ENCODE measurements at regions of chr9 and their contacts with region 1.

Region 1: GRCh38 chr9:23747088-23748075 is 78.7 kb downstream of the ELAVL2 start:
- DNase-seq: no peak
- ATAC-seq: no peak
- H3K4me3 ChIP-seq: no peak overlapping the region
- H3K27ac ChIP-seq: no peak overlapping the region
- H3K4me1 ChIP-seq: no peaks in the 10 kb centered on the region
- H3K27me3 ChIP-seq: no peaks in the 10 kb centered on the region
- CTCF ChIP-seq: no peak

Region 2: DNA sequence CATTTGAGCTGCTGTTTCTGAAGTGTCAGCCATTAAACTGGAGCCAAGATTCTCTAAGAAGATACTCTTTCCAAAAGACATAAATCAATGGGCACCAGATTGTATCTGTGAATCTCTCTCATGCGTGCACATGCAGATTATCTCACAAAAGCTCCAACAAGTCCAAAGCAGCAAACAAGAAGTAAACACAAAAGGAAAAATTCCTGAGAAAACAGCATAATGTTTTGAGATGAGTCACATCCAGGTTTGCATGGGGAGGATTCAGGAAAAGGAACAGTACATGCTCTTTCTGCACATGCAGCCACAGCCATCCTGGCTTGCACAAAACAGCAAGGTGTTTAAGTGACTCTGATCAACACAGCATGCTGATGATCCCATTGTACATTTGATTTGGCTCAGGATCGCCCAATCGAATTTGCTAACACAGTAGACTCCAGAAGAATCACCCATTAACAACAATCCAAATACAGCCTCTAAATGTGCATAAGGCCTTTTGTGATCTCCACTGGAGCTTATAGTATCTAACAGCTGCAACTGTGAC is 64.4 kb before region 1 on chr9:
- intact Hi-C with region 1: no loop called
- DNase-seq: no peak
- ATAC-seq: no peak
- H3K4me3 ChIP-seq: no peak overlapping the region
- H3K27ac ChIP-seq: no peak overlapping the region
- H3K4me1 ChIP-seq: no peaks in the 10 kb centered on the region
- H3K27me3 ChIP-seq: no peaks in the 10 kb centered on the region
- CTCF ChIP-seq: no peak

Region 3: DNA sequence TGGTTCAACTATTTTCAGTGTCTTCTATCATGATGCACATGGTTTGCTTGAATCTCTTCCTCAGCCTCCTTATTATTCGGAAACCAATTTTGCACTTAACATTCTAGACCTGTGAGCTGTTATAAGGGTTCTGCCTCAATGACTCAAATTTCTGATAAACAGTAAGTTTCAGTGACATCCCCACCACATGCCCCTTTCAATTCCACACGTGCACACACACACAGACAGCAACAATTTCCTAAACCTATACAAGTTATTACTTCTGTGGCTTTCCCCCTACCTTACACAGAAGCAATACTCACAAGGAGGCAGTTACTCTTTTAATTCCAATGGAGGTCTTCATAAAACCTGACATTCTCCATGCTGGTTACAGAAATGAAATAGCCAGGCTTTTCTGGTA is 23.7 kb before region 1 on chr9:
- intact Hi-C with region 1: loop called in 1 of 2 experiments (anchors 1 kb)
- DNase-seq: no peak
- ATAC-seq: no peak
- H3K4me3 ChIP-seq: no peak overlapping the region
- H3K27ac ChIP-seq: no peak overlapping the region
- H3K4me1 ChIP-seq: no peaks in the 10 kb centered on the region
- H3K27me3 ChIP-seq: no peaks in the 10 kb centered on the region
- CTCF ChIP-seq: no peak

Region 4: DNA sequence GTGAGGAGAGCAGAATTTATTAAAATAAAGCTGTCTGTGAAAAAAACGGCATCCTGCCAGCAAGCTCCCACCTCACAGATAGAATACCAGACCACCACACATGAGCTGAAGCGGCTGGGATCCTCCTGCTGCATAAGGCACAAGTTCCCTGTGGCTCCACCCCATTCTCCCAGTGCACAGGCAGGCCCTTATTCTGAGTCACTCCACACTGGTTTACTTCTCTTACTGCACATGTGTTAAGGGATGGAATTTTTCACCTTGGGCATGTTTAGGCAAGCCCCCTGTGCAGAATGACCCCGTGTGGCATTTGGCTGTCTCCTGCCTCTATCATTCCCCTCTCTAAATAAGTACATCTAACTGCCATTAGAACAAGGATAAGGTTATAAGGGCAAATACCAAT is 193.7 kb after region 1 on chr9:
- intact Hi-C with region 1: no loop called
- DNase-seq: no peak
- ATAC-seq: no peak
- H3K4me3 ChIP-seq: no peak overlapping the region
- H3K27ac ChIP-seq: no peak overlapping the region
- H3K4me1 ChIP-seq: no peaks in the 10 kb centered on the region
- H3K27me3 ChIP-seq: no peaks in the 10 kb centered on the region
- CTCF ChIP-seq: no peak